ENCODE measurements at regions of chr7 and their contacts with region 1.

Region 1: GRCh38 chr7:44587843-44588711 is 6.0 kb upstream of the TMED4 start:
- DNase-seq: no peak
- ATAC-seq: peak; percentile 81

Region 2: GRCh38 chr7:44847508-44847920 is 259.4 kb after region 1 on chr7:
- intact Hi-C with region 1: loop called (anchors 5 kb)
- DNase-seq: peak; percentile 91
- ATAC-seq: peak; percentile 79

Region 3: GRCh38 chr7:44921607-44922359 is 333.7 kb after region 1 on chr7:
- intact Hi-C with region 1: loop called (anchors 5 kb)
- DNase-seq: peak; percentile 96
- ATAC-seq: peak; percentile 97

Measured in Right ventricle myocardium superior (tissue), 1 donor.